A549 (cell line): ENCODE measurements at regions of chr17 and their contacts with region 1.

Region 1: DNA sequence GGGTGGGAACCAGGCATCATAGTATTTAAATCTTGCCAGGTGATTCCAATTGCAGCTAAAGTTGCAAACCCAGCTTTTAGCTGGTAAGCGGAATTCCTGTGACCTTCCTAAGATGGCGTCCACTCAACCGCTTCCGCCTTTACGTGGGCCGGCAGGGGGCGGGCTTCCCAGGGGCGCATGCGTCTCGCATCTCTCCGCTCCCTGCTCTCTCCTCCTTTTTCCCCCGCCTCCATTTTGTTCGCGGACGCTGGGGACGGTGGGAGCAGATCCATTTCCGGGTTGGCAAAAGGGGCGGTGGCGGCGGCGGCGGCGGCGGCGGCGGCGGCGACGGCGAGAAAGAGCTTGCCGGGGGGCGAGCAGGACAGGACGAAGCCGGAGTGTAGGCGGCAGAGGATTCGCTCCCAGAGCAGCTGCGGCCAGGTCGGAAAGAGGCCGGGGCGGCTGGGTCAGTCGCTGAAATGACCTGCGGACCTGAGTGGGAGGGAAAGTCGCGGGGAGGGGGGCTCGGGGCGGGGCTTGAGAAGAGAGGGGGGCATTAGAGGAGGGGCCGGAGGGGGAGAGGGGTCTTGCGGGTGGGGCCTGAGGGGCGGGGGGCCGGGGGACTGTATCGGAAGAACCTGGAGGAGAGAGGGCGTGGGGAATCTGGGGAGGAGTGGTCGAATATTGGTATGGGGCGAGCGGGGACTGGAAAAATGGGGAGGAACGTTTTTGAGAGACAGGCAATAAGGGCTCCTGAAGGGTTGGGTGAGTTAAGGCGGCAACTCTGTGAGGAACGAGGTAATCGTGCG is at the start of gene WIPF2:
- DNase-seq: peak; percentile 96 to 98
- ATAC-seq: peak; percentile 95 to 98
- H3K4me3 ChIP-seq: peak within 1 kb of the TSS; percentile 70
- H3K27ac ChIP-seq: peak within 1 kb of the TSS; percentile 87 to 92
- H3K4me1 ChIP-seq: peaks cover 17% of the 10 kb centered on the region; the same call in 2 of the 3 replicates
- CTCF ChIP-seq: 0 out of 3 replicates have a peak, but pooled peaks have one; percentile 29
- EP300 ChIP-seq: no peak
- POLR2A ChIP-seq: no peak; the same call in 1 of the 2 replicates
- RAD21 ChIP-seq: no peak
- polyA plus RNA-seq, gene WIPF2: 13.8 and 15.3 TPM in 2 replicates

Region 2: DNA sequence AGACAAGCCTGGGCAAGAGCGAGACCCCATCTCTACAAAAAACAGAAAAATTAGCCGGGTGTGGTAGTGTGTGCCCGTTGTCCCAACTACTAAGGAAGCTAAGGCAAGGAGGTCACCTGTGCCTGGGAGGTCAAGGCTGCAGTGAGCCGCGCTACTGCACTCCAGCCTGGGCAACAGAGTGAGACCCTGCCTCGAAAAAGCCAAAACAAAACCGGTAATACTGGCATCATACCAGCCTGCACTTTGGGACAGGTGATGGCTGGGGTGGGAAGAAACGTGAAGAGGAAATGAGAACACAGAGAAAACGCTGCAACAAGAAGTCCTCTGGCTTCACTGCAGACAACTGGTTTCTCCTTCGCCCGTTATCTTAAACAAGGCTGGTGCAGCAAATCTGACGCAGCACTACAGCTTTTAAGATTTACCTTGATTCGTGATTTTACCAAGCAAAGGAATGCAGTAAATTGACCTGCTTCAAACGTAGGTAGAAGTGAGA is 79.7 kb before region 1 on chr17:
- CTCF ChIA-PET with region 1: no interaction called
- POLR2A ChIA-PET with region 1: interaction called, 13 read pairs
- DNase-seq: no peak
- ATAC-seq: peak; percentile 13 to 36
- H3K4me3 ChIP-seq: peak overlapping the region; percentile 58
- H3K27ac ChIP-seq: peak overlapping the region; percentile 91 to 98
- H3K4me1 ChIP-seq: peaks cover 16% of the 10 kb centered on the region; the same call in 2 of the 3 replicates
- CTCF ChIP-seq: no peak
- EP300 ChIP-seq: no peak
- POLR2A ChIP-seq: no peak
- RAD21 ChIP-seq: no peak

Region 3: DNA sequence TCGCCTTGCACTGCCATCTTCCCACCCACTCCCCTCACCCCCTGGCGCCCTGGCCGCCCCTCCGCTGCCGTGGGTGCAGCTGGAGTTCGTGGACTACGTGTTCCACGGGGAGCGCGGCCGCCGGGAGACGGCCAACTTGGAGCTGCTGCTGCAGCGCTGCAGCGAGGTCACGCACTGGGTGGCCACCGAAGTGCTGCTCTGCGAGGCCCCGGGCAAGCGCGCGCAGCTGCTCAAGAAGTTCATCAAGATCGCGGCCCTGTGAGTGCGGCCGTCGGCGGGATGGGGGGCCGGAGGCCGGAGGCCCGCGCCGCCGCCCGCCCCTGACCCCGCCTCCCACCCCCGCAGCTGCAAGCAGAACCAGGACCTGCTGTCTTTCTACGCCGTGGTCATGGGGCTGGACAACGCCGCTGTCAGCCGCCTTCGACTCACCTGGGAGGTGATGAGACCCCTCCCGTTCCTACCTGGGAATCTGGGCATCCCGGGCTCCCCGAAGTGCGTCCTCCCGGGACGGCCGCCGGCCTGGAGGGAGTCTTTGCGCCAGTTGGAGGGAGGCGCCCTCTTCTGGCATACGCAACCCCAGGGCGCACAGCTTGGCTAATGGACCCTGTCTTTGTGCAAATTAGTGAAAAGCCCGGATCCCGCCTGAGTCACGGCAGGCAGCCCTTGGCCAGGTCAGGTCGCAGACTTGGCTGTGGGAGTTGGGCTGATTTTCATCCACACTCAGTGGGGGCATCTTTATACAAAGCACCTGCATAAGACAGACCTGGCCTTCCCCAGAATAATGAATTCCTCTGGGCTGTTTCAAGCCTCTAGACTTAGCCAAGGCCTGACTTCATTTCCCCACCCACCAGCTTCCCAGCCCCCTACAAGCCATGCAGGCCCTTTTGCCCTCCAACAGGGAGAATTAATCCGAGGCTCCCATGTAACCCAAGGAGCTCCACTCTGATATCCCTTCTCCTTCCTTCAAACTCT is 27.7 kb before region 1 on chr17:
- CTCF ChIA-PET with region 1: interaction called, 91 read pairs
- POLR2A ChIA-PET with region 1: interaction called, 7 read pairs
- DNase-seq: peak; percentile 86 to 96
- ATAC-seq: peak; percentile 83 to 91
- H3K4me3 ChIP-seq: peak overlapping the region; percentile 47
- H3K27ac ChIP-seq: peak overlapping the region; percentile 50 to 70
- H3K4me1 ChIP-seq: peaks cover 17% of the 10 kb centered on the region
- CTCF ChIP-seq: peak; percentile 95
- EP300 ChIP-seq: no peak
- POLR2A ChIP-seq: no peak; the same call in 1 of the 2 replicates
- RAD21 ChIP-seq: peak; percentile 74 to 77

Region 4: DNA sequence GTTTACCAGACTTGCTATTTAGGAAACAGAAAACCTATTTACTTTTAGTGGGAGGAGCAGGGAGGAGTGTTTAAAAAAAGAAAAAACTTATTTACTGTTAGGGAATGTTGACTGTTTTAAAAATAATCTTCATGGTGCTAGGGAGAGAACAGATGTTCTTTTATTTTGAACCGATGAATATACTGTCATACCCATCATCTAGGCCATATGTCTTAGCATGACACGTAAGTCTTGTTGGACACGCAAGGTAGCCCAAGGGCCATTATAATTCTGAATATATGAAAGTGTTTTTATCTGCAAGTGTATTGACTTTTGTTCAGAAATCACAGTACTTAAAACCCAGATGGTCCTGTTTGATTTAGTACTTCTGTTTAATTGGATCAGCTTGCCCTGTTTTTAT is 11.4 kb after region 1 on chr17:
- CTCF ChIA-PET with region 1: interaction called, 35 read pairs
- POLR2A ChIA-PET with region 1: no interaction called
- DNase-seq: no peak
- ATAC-seq: no peak
- H3K4me3 ChIP-seq: no peak overlapping the region
- H3K27ac ChIP-seq: no peak overlapping the region
- H3K4me1 ChIP-seq: no peaks in the 10 kb centered on the region
- CTCF ChIP-seq: no peak
- EP300 ChIP-seq: no peak
- POLR2A ChIP-seq: no peak
- RAD21 ChIP-seq: no peak

Region 5: GRCh38 chr17:40251576-40251975 is 32.3 kb after region 1 on chr17:
- CTCF ChIA-PET with region 1: interaction called, 10 read pairs
- POLR2A ChIA-PET with region 1: no interaction called
- DNase-seq: peak; percentile 58 to 64
- ATAC-seq: peak; percentile 77 to 83
- H3K4me3 ChIP-seq: no peak overlapping the region
- H3K27ac ChIP-seq: no peak overlapping the region
- H3K4me1 ChIP-seq: peaks cover 13% of the 10 kb centered on the region
- CTCF ChIP-seq: no peak
- EP300 ChIP-seq: no peak
- POLR2A ChIP-seq: no peak
- RAD21 ChIP-seq: no peak

Region 6: DNA sequence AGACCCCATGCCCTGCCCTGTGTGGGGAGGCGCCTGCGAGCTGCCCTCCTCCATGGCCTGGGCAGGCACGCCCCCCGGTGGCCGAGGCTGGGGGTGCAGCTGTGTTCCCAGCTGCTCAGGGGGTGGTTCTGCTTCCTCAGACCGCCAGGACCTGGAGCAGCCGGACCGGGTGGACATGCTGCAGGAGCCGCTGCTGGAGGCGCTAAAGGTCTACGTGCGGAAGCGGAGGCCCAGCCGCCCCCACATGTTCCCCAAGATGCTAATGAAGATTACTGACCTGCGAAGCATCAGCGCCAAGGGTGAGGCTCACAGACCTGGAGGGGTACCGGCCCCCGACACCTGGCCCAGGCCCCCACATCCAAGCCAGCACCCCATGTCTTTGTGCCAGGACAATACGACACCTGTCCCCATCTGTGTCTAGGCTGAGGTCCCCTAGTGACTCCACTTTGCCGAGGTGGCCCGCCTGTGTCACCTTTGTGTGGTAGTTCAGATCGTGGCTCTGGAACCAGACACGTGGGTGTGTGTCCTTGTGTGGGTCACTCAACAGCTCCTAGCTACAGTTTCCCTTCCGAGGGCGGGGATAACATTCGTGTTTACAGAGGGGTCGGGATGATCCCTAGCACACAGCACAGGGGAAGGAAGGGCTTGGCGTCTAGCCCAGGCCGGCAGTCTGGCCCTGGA is 136.0 kb after region 1 on chr17:
- CTCF ChIA-PET with region 1: interaction called, 15 read pairs
- POLR2A ChIA-PET with region 1: no interaction called
- DNase-seq: peak; percentile 77 to 97
- ATAC-seq: peak; percentile 58 to 84
- H3K4me3 ChIP-seq: no peak overlapping the region
- H3K27ac ChIP-seq: peak overlapping the region in 1 of 2 experiments; percentile 62; a peak in 3 of 6 replicates
- H3K4me1 ChIP-seq: peaks cover 52% of the 10 kb centered on the region
- CTCF ChIP-seq: peak; percentile 98
- EP300 ChIP-seq: no peak
- POLR2A ChIP-seq: no peak
- RAD21 ChIP-seq: peak; percentile 99 to 100

Region 7: GRCh38 chr17:40526668-40527067 is 307.4 kb after region 1 on chr17:
- CTCF ChIA-PET with region 1: no interaction called
- POLR2A ChIA-PET with region 1: no interaction called
- DNase-seq: no peak
- ATAC-seq: no peak
- H3K4me3 ChIP-seq: no peak overlapping the region
- H3K27ac ChIP-seq: peak overlapping the region; percentile 95 to 99
- H3K4me1 ChIP-seq: peaks cover 39% of the 10 kb centered on the region
- CTCF ChIP-seq: no peak
- EP300 ChIP-seq: no peak
- POLR2A ChIP-seq: no peak
- RAD21 ChIP-seq: no peak